CD4-positive, alpha-beta T cell (primary cell): ENCODE measurements at regions of chr12 and their contacts with region 1.

Region 1: DNA sequence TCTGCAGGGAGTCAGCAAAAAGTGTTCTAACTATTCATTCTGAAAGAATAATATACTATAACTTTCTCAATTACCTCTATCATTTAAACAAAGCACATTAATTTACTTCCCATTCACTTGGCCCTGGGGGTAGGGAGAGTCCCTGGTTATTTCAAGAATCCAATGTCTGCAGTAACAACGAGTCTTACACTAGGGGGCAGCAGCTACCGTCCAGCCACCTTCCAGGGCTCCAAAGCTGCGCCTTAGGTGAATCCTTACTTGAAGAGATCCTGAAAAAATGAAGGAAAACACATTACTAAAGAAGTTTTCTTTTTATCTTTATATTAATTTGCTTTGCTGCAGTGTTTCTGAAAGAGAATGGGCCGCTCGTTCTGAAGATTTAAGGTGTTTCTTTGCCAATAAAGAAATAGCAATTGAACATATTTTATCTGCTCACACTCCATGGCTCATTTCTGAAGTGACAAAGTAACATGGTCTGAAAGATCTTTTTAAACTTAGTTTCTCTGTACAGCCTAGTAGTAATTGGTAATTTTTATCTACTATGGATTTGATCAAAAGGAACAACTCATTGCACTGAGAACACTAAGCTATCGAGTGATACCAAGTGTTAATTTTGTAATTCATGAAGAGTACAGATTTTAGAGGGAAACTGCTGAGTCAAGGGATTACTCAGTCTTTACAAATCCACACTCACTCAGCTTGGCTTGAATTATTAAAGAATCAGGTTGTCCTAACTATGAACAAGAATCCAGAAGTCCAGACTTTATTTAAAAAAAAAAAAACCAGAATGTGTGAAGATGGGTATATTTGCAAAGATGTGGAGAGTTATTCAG is 27.6 kb downstream of the BHLHE41 start:
- DNase-seq: peak; percentile 22 to 78 (median 40)
- ATAC-seq: peak; percentile 80
- H3K4me3 ChIP-seq: no peak overlapping the region
- H3K4me3 Mint-ChIP-seq: no peak overlapping the region
- H3K27ac ChIP-seq: no peak overlapping the region
- H3K27ac Mint-ChIP-seq: no peak overlapping the region
- H3K4me1 ChIP-seq: no peaks in the 10 kb centered on the region
- H3K4me1 Mint-ChIP-seq: no peaks in the 10 kb centered on the region
- H3K27me3 ChIP-seq: no peaks in the 10 kb centered on the region
- H3K27me3 Mint-ChIP-seq: peaks cover 17% of the 10 kb centered on the region
- CTCF ChIP-seq: peak; percentile 98

Region 2: GRCh38 chr12:25308756-25309155 is 788.5 kb before region 1 on chr12:
- CTCF ChIA-PET with region 1: no interaction called
- POLR2A ChIA-PET with region 1: no interaction called
- intact Hi-C with region 1: no loop called
- DNase-seq: no peak
- ATAC-seq: no peak
- H3K4me3 ChIP-seq: no peak overlapping the region
- H3K4me3 Mint-ChIP-seq: no peak overlapping the region
- H3K27ac ChIP-seq: no peak overlapping the region
- H3K27ac Mint-ChIP-seq: no peak overlapping the region
- H3K4me1 ChIP-seq: no peaks in the 10 kb centered on the region
- H3K4me1 Mint-ChIP-seq: no peaks in the 10 kb centered on the region
- H3K27me3 ChIP-seq: no peaks in the 10 kb centered on the region
- H3K27me3 Mint-ChIP-seq: no peaks in the 10 kb centered on the region
- CTCF ChIP-seq: no peak

Region 3: DNA sequence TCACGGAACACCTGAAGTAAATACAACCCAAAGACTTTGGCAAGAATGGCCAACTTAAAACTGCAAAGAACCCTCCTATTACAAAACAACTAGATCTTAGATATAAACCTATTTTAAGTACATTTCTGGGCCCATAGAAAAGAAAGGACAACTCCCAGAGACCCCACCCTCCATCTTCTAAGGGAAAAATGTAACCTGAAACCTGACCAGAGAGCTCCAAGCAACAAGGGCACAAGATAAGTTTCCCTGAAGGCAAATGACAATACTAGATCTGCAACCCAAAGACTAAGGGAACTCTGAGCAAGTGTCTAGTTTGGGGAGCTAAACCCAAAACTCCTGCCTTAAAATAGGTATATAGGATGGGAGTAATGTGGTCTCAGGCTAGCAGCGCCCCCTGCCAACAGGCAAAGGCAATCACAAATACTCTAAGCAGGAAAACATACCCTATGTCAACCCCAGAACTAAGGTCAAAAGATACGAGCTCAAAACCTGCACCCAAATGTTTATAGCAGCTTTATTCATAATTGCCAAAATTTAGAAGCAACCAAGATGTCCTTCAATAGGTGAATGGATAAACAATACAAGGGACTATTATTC is 516.9 kb after region 1 on chr12:
- CTCF ChIA-PET with region 1: no interaction called
- POLR2A ChIA-PET with region 1: no interaction called
- intact Hi-C with region 1: loop called in 1 of 2 experiments (anchors 1 kb)
- DNase-seq: peak in 5 of 14 experiments; percentile 2 to 21 (median 10)
- ATAC-seq: no peak
- H3K4me3 ChIP-seq: no peak overlapping the region
- H3K4me3 Mint-ChIP-seq: no peak overlapping the region
- H3K27ac ChIP-seq: no peak overlapping the region
- H3K27ac Mint-ChIP-seq: no peak overlapping the region
- H3K4me1 ChIP-seq: no peaks in the 10 kb centered on the region
- H3K4me1 Mint-ChIP-seq: no peaks in the 10 kb centered on the region
- H3K27me3 ChIP-seq: no peaks in the 10 kb centered on the region
- H3K27me3 Mint-ChIP-seq: no peaks in the 10 kb centered on the region
- CTCF ChIP-seq: peak; percentile 23

Region 4: GRCh38 chr12:26701604-26702215 is 604.4 kb after region 1 on chr12:
- CTCF ChIA-PET with region 1: no interaction called
- POLR2A ChIA-PET with region 1: no interaction called
- intact Hi-C with region 1: loop called in 1 of 2 experiments (anchors 2 kb)
- DNase-seq: peak in 3 of 14 experiments; percentile 40 to 48 (median 44)
- ATAC-seq: no peak
- H3K4me3 ChIP-seq: no peak overlapping the region
- H3K4me3 Mint-ChIP-seq: no peak overlapping the region
- H3K27ac ChIP-seq: no peak overlapping the region
- H3K27ac Mint-ChIP-seq: no peak overlapping the region
- H3K4me1 ChIP-seq: no peaks in the 10 kb centered on the region
- H3K4me1 Mint-ChIP-seq: no peaks in the 10 kb centered on the region
- H3K27me3 ChIP-seq: no peaks in the 10 kb centered on the region
- H3K27me3 Mint-ChIP-seq: no peaks in the 10 kb centered on the region
- CTCF ChIP-seq: peak; percentile 61